IMR-90 (cell line): ENCODE measurements at regions of chr20 and their contacts with region 1.

Region 1: DNA sequence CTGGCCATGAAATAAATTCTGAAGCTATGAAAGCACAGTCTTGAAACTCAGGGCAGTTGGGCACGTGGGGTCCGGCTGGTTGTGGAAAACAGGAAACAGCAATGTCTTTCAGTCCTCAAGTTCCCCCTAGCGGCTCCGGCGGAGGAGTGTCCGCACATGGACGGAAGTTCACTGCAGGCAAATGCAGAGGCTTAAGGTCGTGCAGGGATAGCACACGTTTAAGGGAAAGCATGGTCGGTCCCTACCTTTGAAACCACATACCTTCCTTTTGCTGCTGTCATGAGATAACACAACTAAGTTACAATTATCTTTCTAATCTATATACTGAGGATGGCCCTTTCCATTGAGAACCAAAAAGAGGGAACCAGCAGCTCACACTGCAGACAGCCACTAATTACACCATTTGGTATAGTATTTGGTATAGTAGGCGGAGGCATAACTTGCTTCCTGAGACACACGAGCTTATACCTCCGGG is 52.6 kb upstream of the NFATC2 start:
- DNase-seq: peak; percentile 89
- ATAC-seq: peak; percentile 100
- H3K4me3 ChIP-seq: no peak overlapping the region
- H3K27ac ChIP-seq: no peak overlapping the region
- H3K4me1 ChIP-seq: no peaks in the 10 kb centered on the region
- H3K27me3 ChIP-seq: no peaks in the 10 kb centered on the region
- CTCF ChIP-seq: peak; percentile 95
- POLR2A ChIP-seq: peak; percentile 36; the same call in 1 of the 2 replicates
- RAD21 ChIP-seq: peak; percentile 98

Region 2: GRCh38 chr20:50824193-50824632 is 770.9 kb before region 1 on chr20:
- CTCF ChIA-PET with region 1: no interaction called
- POLR2A ChIA-PET with region 1: no interaction called
- dilution Hi-C with region 1: no loop called
- in situ Hi-C with region 1: no loop called
- intact Hi-C with region 1: no loop called
- DNase-seq: peak; percentile 86
- ATAC-seq: peak; percentile 68
- H3K4me3 ChIP-seq: no peak overlapping the region
- H3K27ac ChIP-seq: no peak overlapping the region
- H3K4me1 ChIP-seq: peaks cover 14% of the 10 kb centered on the region
- H3K27me3 ChIP-seq: no peaks in the 10 kb centered on the region
- CTCF ChIP-seq: no peak
- POLR2A ChIP-seq: no peak
- RAD21 ChIP-seq: no peak

Region 3: DNA sequence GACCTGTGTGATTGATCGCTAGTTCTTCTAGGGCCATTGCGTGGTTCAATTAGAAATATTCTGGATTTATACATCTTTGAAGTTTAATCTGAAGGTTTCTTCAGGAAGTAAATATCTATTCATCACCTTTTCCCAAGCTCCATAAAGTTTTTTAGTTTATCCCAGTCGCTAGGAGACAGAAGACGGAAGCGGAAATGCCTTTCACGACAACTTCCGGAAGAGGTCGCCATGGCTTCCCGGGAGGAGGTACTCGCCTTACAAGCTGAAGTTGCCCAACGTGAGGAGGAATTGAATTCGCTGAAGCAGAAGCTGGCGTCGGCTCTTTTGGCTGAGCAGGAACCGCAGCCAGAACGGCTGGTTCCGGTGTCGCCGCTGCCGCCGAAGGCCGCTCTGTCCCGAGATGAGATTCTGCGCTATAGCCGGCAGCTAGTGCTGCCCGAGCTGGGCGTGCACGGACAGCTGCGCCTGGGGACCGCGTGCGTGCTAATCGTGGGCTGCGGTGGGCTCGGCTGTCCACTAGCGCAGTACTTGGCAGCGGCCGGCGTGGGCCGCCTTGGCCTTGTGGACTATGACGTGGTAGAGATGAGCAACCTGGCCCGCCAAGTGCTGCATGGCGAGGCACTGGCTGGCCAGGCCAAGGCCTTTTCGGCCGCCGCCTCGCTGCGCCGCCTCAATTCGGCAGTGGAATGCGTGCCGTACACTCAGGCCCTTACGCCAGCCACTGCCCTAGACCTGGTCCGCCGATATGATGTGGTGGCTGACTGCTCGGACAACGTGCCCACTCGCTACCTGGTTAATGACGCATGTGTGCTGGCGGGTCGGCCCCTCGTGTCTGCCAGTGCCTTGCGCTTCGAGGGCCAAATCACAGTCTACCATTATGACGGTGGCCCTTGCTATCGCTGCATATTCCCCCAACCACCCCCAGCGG is 636.2 kb before region 1 on chr20 and contains the start of gene MOCS3:
- CTCF ChIA-PET with region 1: no interaction called
- POLR2A ChIA-PET with region 1: interaction called, 12 read pairs
- dilution Hi-C with region 1: no loop called
- in situ Hi-C with region 1: no loop called
- intact Hi-C with region 1: no loop called
- DNase-seq: peak; percentile 93
- ATAC-seq: peak; percentile 83
- H3K4me3 ChIP-seq: peak within 1 kb of the TSS; percentile 91
- H3K27ac ChIP-seq: peak within 1 kb of the TSS; percentile 93
- H3K4me1 ChIP-seq: peaks cover 10% of the 10 kb centered on the region
- H3K27me3 ChIP-seq: no peaks in the 10 kb centered on the region
- CTCF ChIP-seq: 0 out of 2 replicates have a peak, but pooled peaks have one; percentile 0
- POLR2A ChIP-seq: peak; percentile 78; the same call in 1 of the 2 replicates
- RAD21 ChIP-seq: no peak; the same call in 1 of the 2 replicates
- total RNA-seq, gene MOCS3: 9.9 and 11.4 TPM in 2 replicates

Region 4: GRCh38 chr20:51306503-51307358 is 288.4 kb before region 1 on chr20:
- CTCF ChIA-PET with region 1: interaction called, 4 read pairs
- POLR2A ChIA-PET with region 1: no interaction called
- dilution Hi-C with region 1: no loop called
- in situ Hi-C with region 1: no loop called
- intact Hi-C with region 1: loop called (anchors 2 kb)
- DNase-seq: peak; percentile 70
- ATAC-seq: peak; percentile 97
- H3K4me3 ChIP-seq: no peak overlapping the region
- H3K27ac ChIP-seq: no peak overlapping the region
- H3K4me1 ChIP-seq: peaks cover 5% of the 10 kb centered on the region; the same call in 1 of the 2 replicates
- H3K27me3 ChIP-seq: no peaks in the 10 kb centered on the region
- CTCF ChIP-seq: peak; percentile 94
- POLR2A ChIP-seq: no peak; the same call in 1 of the 2 replicates
- RAD21 ChIP-seq: peak; percentile 98

Region 5: GRCh38 chr20:51372176-51372803 is 222.8 kb before region 1 on chr20:
- CTCF ChIA-PET with region 1: interaction called, 4 read pairs
- POLR2A ChIA-PET with region 1: no interaction called
- dilution Hi-C with region 1: no loop called
- in situ Hi-C with region 1: loop called (anchors 5 kb)
- intact Hi-C with region 1: loop called (anchors 1 kb)
- DNase-seq: peak; percentile 74
- ATAC-seq: peak; percentile 98
- H3K4me3 ChIP-seq: no peak overlapping the region
- H3K27ac ChIP-seq: no peak overlapping the region; the same call in 1 of the 2 replicates
- H3K4me1 ChIP-seq: peaks cover 7% of the 10 kb centered on the region
- H3K27me3 ChIP-seq: no peaks in the 10 kb centered on the region
- CTCF ChIP-seq: peak; percentile 94
- POLR2A ChIP-seq: peak; percentile 48
- RAD21 ChIP-seq: peak; percentile 97

Region 6: DNA sequence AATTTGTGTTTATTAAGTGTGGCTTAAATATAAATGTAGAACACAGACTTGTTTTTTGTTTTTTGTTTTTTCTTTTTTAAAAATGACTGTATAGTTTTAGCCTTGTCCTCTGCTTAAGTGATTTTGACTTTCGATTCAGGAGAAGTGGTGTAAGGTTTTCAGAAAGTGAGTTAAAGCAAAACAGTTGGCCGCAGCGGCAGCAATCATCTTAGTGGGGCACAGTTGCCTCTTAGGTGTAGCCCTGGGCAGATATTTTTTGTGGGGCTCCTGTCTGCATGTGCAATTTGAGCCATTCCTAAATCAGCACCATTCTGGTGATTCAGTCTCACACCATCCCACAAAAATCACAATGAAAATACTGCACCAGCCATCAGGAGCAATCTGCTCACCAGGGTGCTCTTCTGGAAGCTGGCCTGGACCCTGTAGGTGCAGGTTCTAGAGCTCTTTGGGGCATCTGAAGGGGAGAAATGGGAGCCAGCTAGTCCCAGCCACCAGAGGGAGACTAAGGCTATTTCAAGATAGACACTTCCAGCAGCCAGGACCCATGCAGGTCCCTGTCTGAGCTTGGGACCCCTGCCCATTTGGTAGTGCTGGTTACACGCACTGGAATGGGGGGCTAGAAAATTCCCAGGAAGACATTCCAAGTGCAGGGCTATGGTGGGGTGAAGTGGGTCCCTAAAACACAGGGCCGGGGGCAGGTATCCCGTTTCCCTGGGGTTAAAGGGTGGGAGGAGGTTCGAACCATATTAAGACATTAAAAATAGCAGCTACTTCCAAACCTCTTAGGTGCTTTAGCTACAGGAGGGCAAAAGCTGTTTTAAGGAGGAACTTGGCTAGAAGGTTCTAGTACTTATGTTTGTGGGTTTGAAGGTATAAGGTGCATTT is 209.2 kb before region 1 on chr20:
- CTCF ChIA-PET with region 1: interaction called, 18 read pairs
- POLR2A ChIA-PET with region 1: no interaction called
- dilution Hi-C with region 1: no loop called
- in situ Hi-C with region 1: no loop called
- intact Hi-C with region 1: loop called (anchors 1 kb)
- DNase-seq: peak; percentile 41
- ATAC-seq: peak; percentile 49; the same call in 1 of the 2 replicates
- H3K4me3 ChIP-seq: no peak overlapping the region
- H3K27ac ChIP-seq: no peak overlapping the region
- H3K4me1 ChIP-seq: peaks cover 12% of the 10 kb centered on the region
- H3K27me3 ChIP-seq: no peaks in the 10 kb centered on the region
- CTCF ChIP-seq: peak; percentile 56
- POLR2A ChIP-seq: no peak
- RAD21 ChIP-seq: peak; percentile 58

Region 7: GRCh38 chr20:51404298-51405060 is 190.6 kb before region 1 on chr20:
- CTCF ChIA-PET with region 1: interaction called, 3 read pairs
- POLR2A ChIA-PET with region 1: no interaction called
- dilution Hi-C with region 1: loop called (anchors 25 kb)
- in situ Hi-C with region 1: no loop called
- intact Hi-C with region 1: no loop called
- DNase-seq: no peak
- ATAC-seq: no peak
- H3K4me3 ChIP-seq: no peak overlapping the region
- H3K27ac ChIP-seq: no peak overlapping the region
- H3K4me1 ChIP-seq: peaks cover 3% of the 10 kb centered on the region
- H3K27me3 ChIP-seq: no peaks in the 10 kb centered on the region
- CTCF ChIP-seq: no peak
- POLR2A ChIP-seq: no peak
- RAD21 ChIP-seq: no peak

Region 8: DNA sequence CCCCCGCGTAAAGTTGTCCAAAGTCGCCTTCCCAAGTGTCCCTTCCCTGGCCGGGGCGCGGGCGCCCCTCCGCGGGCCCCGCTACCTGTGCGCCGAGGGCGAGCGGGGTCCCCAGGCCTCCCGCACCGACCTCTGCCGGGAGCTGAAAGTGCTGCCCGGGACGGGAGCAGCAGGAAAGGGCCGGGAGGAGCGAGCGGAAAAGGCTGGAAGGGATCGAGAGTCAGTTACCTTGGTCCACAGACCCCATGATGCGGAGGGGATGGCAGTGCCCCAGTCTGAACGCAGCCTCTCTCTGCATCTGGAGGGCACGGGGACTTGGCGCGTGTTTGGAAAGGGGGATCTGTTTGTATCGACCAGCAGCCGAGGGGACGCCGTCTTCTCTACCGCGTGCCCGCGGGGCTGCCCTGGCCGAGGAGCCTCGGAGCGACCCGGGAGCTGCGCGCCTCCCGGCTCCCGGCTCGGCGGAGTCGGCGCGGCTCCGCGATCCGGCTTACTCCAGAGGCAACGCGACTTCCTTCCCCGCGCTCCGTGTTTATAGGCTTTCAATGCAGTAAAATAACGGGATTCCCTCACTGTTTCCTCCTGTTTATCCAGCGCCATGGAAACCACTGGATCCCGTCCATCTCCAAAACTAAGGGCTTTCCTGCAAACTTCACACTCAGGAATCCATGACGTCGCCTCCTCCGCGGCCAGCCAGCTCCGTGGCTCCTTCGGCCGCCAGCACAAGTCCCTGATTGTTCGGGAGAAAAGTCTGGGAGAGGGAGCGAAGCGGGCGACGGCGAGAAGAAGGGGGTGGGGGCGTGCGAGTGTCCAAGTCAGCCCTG is 32.6 kb before region 1 on chr20:
- CTCF ChIA-PET with region 1: interaction called, 4 read pairs
- POLR2A ChIA-PET with region 1: no interaction called
- dilution Hi-C with region 1: no loop called
- in situ Hi-C with region 1: no loop called
- intact Hi-C with region 1: loop called (anchors 2 kb)
- DNase-seq: peak; percentile 95
- ATAC-seq: peak; percentile 74
- H3K4me3 ChIP-seq: peak overlapping the region; percentile 54
- H3K27ac ChIP-seq: peak overlapping the region; percentile 21; the same call in 1 of the 2 replicates
- H3K4me1 ChIP-seq: peaks cover 12% of the 10 kb centered on the region
- H3K27me3 ChIP-seq: no peaks in the 10 kb centered on the region
- CTCF ChIP-seq: peak; percentile 16; the same call in 1 of the 2 replicates
- POLR2A ChIP-seq: peak; percentile 97
- RAD21 ChIP-seq: peak; percentile 7; the same call in 1 of the 2 replicates

Region 9: GRCh38 chr20:51661609-51662178 is 66.6 kb after region 1 on chr20:
- CTCF ChIA-PET with region 1: no interaction called
- POLR2A ChIA-PET with region 1: no interaction called
- dilution Hi-C with region 1: no loop called
- in situ Hi-C with region 1: no loop called
- intact Hi-C with region 1: no loop called
- DNase-seq: peak; percentile 79
- ATAC-seq: peak; percentile 33
- H3K4me3 ChIP-seq: no peak overlapping the region
- H3K27ac ChIP-seq: peak overlapping the region; percentile 68; the same call in 1 of the 2 replicates
- H3K4me1 ChIP-seq: peaks cover 6% of the 10 kb centered on the region
- H3K27me3 ChIP-seq: no peaks in the 10 kb centered on the region
- CTCF ChIP-seq: no peak
- POLR2A ChIP-seq: no peak
- RAD21 ChIP-seq: no peak